Tibial artery (tissue), 4 donors: ENCODE measurements at regions of chr5 and their contacts with region 1.

Region 1: GRCh38 chr5:78886341-78887230 is 98.5 kb downstream of the ARSB start:
- DNase-seq: no peak
- H3K4me3 ChIP-seq: no peak overlapping the region
- H3K27ac ChIP-seq: no peak overlapping the region
- H3K4me1 ChIP-seq: peaks cover 0 to 22% (median 6%) of the 10 kb centered on the region in 4 donors
- H3K27me3 ChIP-seq: no peaks in the 10 kb centered on the region
- CTCF ChIP-seq: peak; percentile 19 to 56

Region 2: GRCh38 chr5:78706825-78707224 is 179.8 kb before region 1 on chr5:
- intact Hi-C with region 1: no loop called
- DNase-seq: no peak
- H3K4me3 ChIP-seq: no peak overlapping the region
- H3K27ac ChIP-seq: no peak overlapping the region
- H3K4me1 ChIP-seq: peaks cover 0 to 20% (median 0%) of the 10 kb centered on the region in 4 donors
- H3K27me3 ChIP-seq: no peaks in the 10 kb centered on the region
- CTCF ChIP-seq: no peak

Region 3: GRCh38 chr5:78829811-78830527 is 56.6 kb before region 1 on chr5:
- intact Hi-C with region 1: loop called (anchors 10 kb)
- DNase-seq: peak; percentile 82 to 92
- H3K4me3 ChIP-seq: no peak overlapping the region
- H3K27ac ChIP-seq: peak overlapping the region; percentile 72 to 78
- H3K4me1 ChIP-seq: peaks cover 0 to 44% (median 18%) of the 10 kb centered on the region in 4 donors
- H3K27me3 ChIP-seq: no peaks in the 10 kb centered on the region
- CTCF ChIP-seq: no peak

Region 4: GRCh38 chr5:79514391-79515105 is 628.0 kb after region 1 on chr5:
- intact Hi-C with region 1: no loop called
- DNase-seq: peak; percentile 89 to 94
- H3K4me3 ChIP-seq: peak overlapping the region; percentile 89 to 97
- H3K27ac ChIP-seq: peak overlapping the region; percentile 90 to 98
- H3K4me1 ChIP-seq: peaks cover 0 to 15% (median 7%) of the 10 kb centered on the region in 4 donors
- H3K27me3 ChIP-seq: no peaks in the 10 kb centered on the region
- CTCF ChIP-seq: no peak